ENCODE measurements at regions of chr6 and their contacts with region 1.

Region 1: GRCh38 chr6:138572167-138572865 is 73.0 kb upstream of the NHSL1 start:
- DNase-seq: peak; percentile 88
- H3K4me3 ChIP-seq: peak overlapping the region in 2 of 3 experiments; percentile 18 to 33
- H3K27ac ChIP-seq: no peak overlapping the region
- H3K4me1 ChIP-seq: peaks cover 13% of the 10 kb centered on the region
- H3K27me3 ChIP-seq: no peaks in the 10 kb centered on the region
- CTCF ChIP-seq: no peak
- POLR2A ChIP-seq: no peak

Region 2: GRCh38 chr6:138545621-138545980 is 26.7 kb before region 1 on chr6:
- CTCF ChIA-PET with region 1: interaction called, 4 read pairs
- POLR2A ChIA-PET with region 1: interaction called, 3 read pairs
- dilution Hi-C with region 1: no loop called
- intact Hi-C with region 1: loop called (anchors 2 kb)
- DNase-seq: peak; percentile 87
- H3K4me3 ChIP-seq: peak overlapping the region in 2 of 3 experiments; percentile 37 to 76
- H3K27ac ChIP-seq: peak overlapping the region; percentile 94
- H3K4me1 ChIP-seq: peaks cover 61% of the 10 kb centered on the region
- H3K27me3 ChIP-seq: no peaks in the 10 kb centered on the region
- CTCF ChIP-seq: no peak
- POLR2A ChIP-seq: peak; percentile 80

Measured in endothelial cell of umbilical vein (primary cell).